ENCODE measurements at regions of chr7 and their contacts with region 1.

Region 1: GRCh38 chr7:45157653-45158401 is at the start of gene RAMP3:
- H3K4me3 Mint-ChIP-seq: no peak within 1 kb of the TSS
- H3K27ac Mint-ChIP-seq: no peak within 1 kb of the TSS
- H3K4me1 Mint-ChIP-seq: peaks cover 11% of the 10 kb centered on the region
- H3K27me3 Mint-ChIP-seq: peaks cover 35% of the 10 kb centered on the region

Region 2: DNA sequence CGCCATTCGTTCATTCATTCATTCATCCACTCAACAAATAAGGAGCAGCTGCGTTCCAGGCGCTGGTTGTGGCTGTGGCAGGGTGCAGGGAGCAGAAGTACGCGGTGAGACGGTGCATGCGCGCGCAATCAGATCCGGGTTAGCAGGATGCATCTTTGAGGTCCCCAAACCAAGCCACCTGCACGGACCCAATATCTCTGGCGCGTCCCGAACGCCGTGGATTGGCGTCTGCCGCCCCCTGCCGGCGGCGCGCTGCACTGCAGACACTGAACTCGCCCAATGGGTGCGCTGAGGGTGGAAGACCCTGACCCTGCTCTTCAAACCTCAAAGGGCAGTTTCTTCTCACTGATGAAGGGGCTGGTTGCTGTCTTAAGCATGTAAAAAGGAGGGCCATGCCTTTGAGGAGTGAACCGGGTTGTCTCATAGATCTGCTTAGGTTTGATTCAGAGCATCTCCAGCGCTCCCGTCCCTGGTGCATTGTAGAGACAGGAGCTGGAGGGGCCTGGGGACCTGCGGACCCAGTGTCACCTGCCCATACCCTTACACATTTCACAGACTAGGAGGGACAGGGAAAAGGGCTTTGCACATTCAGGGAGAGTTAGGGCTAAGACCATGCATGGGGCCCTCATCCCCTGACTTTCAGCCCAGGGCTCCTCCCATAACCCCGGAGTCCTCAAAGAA is 102.3 kb after region 1 on chr7:
- intact Hi-C with region 1: loop called (anchors 1 kb)
- H3K4me3 Mint-ChIP-seq: no peak overlapping the region
- H3K27ac Mint-ChIP-seq: no peak overlapping the region
- H3K4me1 Mint-ChIP-seq: no peaks in the 10 kb centered on the region
- H3K27me3 Mint-ChIP-seq: peaks cover 23% of the 10 kb centered on the region

Region 3: GRCh38 chr7:45863715-45864114 is 705.9 kb after region 1 on chr7:
- intact Hi-C with region 1: loop called (anchors 10 kb)
- H3K4me3 Mint-ChIP-seq: no peak overlapping the region
- H3K27ac Mint-ChIP-seq: no peak overlapping the region
- H3K4me1 Mint-ChIP-seq: no peaks in the 10 kb centered on the region
- H3K27me3 Mint-ChIP-seq: no peaks in the 10 kb centered on the region